Sigmoid colon (tissue), 7 donors: ENCODE measurements at regions of chr20 and their contacts with region 1.

Region 1: DNA sequence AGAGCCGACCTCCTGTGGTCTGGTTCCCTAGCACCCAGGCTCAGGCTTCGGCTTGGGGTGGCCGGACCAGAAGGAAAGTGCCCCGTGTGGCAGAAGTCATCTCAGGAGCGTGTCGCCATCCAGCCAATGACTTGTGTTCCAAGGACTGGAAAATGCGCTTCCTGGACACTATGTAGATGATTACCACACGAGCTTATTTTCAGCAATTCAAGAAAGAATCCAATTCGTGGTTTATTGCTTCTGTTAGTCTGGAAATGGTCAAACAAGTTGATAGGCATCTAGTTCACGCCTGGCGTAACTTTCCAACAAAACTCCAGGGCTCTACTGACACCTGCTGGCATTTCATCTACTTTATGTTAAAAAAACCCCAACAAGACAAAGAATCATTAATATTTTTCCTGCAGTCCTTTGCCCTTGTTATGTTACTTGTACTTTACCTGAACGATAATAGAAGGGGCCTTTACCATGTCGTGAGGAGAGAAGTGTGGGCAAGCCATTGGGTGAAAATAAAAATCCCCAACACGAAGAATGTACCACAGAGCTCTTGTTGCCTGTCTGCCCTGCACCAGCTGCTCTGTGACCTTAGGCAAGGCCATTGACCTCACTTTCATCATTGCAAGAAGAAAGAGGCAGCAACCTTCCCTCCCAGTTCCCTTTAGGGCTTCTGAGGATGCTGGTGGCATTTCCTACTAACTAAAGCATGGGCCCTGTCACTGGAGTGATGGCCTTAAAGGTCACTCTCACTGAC is 154.7 kb upstream of the LAMP5 start:
- DNase-seq: peak; percentile 70
- H3K4me3 ChIP-seq: no peak overlapping the region
- H3K27ac ChIP-seq: no peak overlapping the region
- H3K4me1 ChIP-seq: peaks cover 0 to 14% (median 7%) of the 10 kb centered on the region in 4 donors
- H3K27me3 ChIP-seq: no peaks in the 10 kb centered on the region
- CTCF ChIP-seq: peak; percentile 16 to 44 (median 35)
- EP300 ChIP-seq: no peak
- POLR2A ChIP-seq: no peak

Region 2: GRCh38 chr20:8756410-8756809 is 603.3 kb before region 1 on chr20:
- intact Hi-C with region 1: loop called (anchors 5 kb)
- DNase-seq: peak; percentile 72
- H3K4me3 ChIP-seq: no peak overlapping the region
- H3K27ac ChIP-seq: peak overlapping the region; percentile 50 to 68 (median 56)
- H3K4me1 ChIP-seq: peaks cover 0 to 18% (median 14%) of the 10 kb centered on the region in 4 donors
- H3K27me3 ChIP-seq: no peaks in the 10 kb centered on the region
- CTCF ChIP-seq: no peak
- EP300 ChIP-seq: no peak
- POLR2A ChIP-seq: no peak

Region 3: DNA sequence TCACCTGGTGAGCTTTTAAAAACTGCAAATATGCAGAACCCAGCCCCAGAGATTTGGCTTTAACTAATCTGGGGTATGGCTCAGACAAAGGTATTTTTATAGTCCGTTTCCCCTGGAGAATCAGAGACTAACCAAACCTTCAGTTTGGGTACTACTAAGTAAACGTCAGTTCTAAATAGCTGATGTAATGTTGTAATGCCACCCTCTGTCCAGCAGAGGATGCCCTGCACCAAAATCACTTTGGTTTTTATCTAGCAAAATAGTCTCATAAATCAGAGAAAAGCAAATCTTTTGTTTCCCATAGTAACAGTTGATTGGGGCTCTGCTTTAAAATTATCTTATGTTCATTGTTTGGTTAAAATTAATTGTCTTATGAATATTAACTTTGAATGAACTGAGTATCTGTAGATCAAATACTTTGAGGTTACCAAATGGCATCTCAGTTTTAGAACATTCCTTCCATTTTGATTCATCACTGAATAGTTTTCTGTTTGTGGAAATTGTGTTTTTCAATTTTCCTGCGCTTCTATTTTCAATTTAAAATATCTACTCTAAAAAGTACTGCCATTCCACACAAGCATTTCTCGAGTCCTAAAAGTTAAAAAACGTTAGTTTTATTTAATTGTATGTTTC is 569.2 kb before region 1 on chr20:
- intact Hi-C with region 1: loop called (anchors 2 kb)
- DNase-seq: no peak
- H3K4me3 ChIP-seq: no peak overlapping the region
- H3K27ac ChIP-seq: peak overlapping the region in 1 of 4 donors; percentile 26
- H3K4me1 ChIP-seq: peaks cover 0 to 19% (median 7%) of the 10 kb centered on the region in 4 donors
- H3K27me3 ChIP-seq: no peaks in the 10 kb centered on the region
- CTCF ChIP-seq: peak; percentile 79 to 99 (median 94)
- EP300 ChIP-seq: no peak
- POLR2A ChIP-seq: no peak

Region 4: GRCh38 chr20:8853805-8854338 is 505.9 kb before region 1 on chr20:
- intact Hi-C with region 1: loop called (anchors 2 kb)
- DNase-seq: no peak
- H3K4me3 ChIP-seq: peak overlapping the region in 1 of 4 donors; percentile 1
- H3K27ac ChIP-seq: peak overlapping the region; percentile 38 to 70 (median 60)
- H3K4me1 ChIP-seq: peaks cover 0 to 41% (median 8%) of the 10 kb centered on the region in 4 donors
- H3K27me3 ChIP-seq: no peaks in the 10 kb centered on the region
- CTCF ChIP-seq: peak; percentile 61 to 90 (median 84)
- EP300 ChIP-seq: no peak
- POLR2A ChIP-seq: no peak

Region 5: DNA sequence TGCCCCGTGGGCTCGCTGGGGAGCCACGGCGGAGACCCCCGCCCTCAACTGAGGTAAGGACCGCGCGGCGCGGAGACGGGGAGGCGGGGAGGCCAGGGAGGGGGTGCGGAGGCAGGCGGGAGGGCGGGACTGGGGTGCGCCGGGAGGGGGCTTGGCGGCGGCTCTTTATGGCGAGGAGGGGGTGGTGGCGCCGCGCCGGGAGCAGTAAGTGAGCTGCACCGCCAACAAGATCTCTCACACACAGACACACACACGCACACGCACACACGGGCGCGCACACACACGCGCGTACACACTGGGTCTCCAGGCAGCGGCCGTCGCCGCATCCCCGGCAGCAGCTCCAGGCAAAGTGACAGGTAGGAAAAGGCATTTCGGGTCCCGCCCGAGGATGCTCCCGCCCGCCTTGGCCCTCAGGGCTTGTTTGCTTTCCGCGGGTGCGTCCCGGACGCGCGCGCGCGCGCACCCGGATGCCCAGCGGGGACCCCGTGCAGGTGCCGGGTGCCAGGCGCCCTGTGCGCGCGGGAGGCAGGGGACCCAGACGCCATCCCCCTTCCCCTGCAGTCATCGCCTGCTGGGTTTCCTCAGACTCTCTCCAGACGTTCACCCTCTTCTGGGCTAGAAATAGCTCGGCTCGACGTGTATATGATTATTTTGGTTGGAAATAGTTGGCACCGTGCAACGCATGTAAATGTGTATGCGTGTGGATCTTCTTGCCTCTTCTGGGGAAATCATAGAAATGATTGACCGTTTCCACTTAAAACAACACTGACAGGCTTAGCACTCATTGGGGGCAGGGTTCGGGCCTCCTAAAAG is 290.7 kb before region 1 on chr20 and contains the start of gene PLCB4:
- intact Hi-C with region 1: loop called (anchors 5 kb)
- DNase-seq: peak; percentile 73
- H3K4me3 ChIP-seq: peak within 1 kb of the TSS; percentile 65 to 98 (median 69)
- H3K27ac ChIP-seq: peak within 1 kb of the TSS; percentile 75 to 91 (median 83)
- H3K4me1 ChIP-seq: peaks cover 0 to 20% (median 7%) of the 10 kb centered on the region in 4 donors
- H3K27me3 ChIP-seq: no peaks in the 10 kb centered on the region
- CTCF ChIP-seq: no peak
- EP300 ChIP-seq: no peak
- POLR2A ChIP-seq: no peak
- total RNA-seq, gene PLCB4: 12.0 to 21.0 (median 13.3) TPM

Region 6: GRCh38 chr20:9078826-9079731 is 280.7 kb before region 1 on chr20:
- intact Hi-C with region 1: no loop called
- DNase-seq: no peak
- H3K4me3 ChIP-seq: no peak overlapping the region
- H3K27ac ChIP-seq: no peak overlapping the region
- H3K4me1 ChIP-seq: peaks cover 0 to 5% (median 2%) of the 10 kb centered on the region in 4 donors
- H3K27me3 ChIP-seq: no peaks in the 10 kb centered on the region
- CTCF ChIP-seq: no peak
- EP300 ChIP-seq: no peak
- POLR2A ChIP-seq: no peak